OCI-LY7 (cell line): ENCODE measurements at regions of chr3 and their contacts with region 1.

Region 1: DNA sequence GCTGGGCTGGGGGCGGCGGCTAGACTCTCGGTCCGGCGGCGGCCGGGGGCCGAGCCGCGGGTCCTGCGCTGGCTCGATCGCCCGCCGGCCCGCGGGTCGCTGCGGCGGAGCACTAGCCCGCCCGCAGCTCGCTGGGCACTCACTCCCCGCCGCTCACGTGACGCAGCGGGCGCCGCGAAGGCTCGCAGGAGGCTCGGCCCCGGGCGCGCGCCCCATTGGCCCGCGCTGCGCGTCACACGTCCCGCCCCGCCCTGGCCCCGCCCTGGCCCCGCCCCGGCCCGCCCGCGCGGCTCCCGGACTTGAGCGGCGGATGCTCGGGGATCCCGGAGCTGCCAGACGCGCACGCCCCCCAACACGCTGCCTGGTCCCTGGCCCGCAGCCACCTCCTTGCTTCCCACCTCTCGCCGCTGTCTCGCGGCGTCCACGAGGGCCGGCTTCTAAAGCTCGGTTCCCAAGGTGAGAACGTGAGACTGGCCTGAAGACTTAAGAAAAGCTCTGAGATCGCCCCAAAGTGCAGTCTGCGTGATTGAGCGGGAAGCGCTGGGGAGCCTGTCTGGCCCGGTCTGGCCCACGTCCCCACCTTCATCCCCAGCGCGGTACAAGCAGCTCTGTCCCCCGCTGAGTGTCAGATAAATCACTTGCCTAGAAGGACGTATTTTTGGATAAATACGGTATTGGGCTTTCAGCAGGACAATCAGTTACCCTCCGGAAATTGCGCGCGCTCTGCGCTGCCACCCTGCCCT is at the start of gene KLF15:
- DNase-seq: peak; percentile 91
- H3K4me3 ChIP-seq: peak within 1 kb of the TSS; percentile 67
- H3K27ac ChIP-seq: peak within 1 kb of the TSS; percentile 67
- H3K4me1 ChIP-seq: peaks cover 49% of the 10 kb centered on the region
- CTCF ChIP-seq: no peak
- total RNA-seq, gene KLF15: 12.3 and 13.8 TPM in 2 replicates

Region 2: GRCh38 chr3:126259411-126260391 is 97.8 kb before region 1 on chr3:
- CTCF ChIA-PET with region 1: no interaction called
- POLR2A ChIA-PET with region 1: interaction called, 3 read pairs
- intact Hi-C with region 1: loop called (anchors 1 kb)
- DNase-seq: peak; percentile 35
- H3K4me3 ChIP-seq: no peak overlapping the region
- H3K27ac ChIP-seq: peak overlapping the region; percentile 73
- H3K4me1 ChIP-seq: peaks cover 37% of the 10 kb centered on the region
- CTCF ChIP-seq: peak; percentile 73

Region 3: GRCh38 chr3:126287536-126288241 is 69.8 kb before region 1 on chr3:
- CTCF ChIA-PET with region 1: no interaction called
- POLR2A ChIA-PET with region 1: interaction called, 3 read pairs
- intact Hi-C with region 1: loop called (anchors 1 kb)
- DNase-seq: peak; percentile 86
- H3K4me3 ChIP-seq: peak overlapping the region; percentile 66
- H3K27ac ChIP-seq: peak overlapping the region; percentile 83
- H3K4me1 ChIP-seq: peaks cover 59% of the 10 kb centered on the region
- CTCF ChIP-seq: no peak

Region 4: GRCh38 chr3:126475413-126476114 is 118.1 kb after region 1 on chr3 and contains the start of gene ZXDC:
- CTCF ChIA-PET with region 1: no interaction called
- POLR2A ChIA-PET with region 1: no interaction called
- intact Hi-C with region 1: loop called (anchors 5 kb)
- DNase-seq: peak; percentile 94
- H3K4me3 ChIP-seq: peak within 1 kb of the TSS; percentile 76
- H3K27ac ChIP-seq: peak within 1 kb of the TSS; percentile 34
- H3K4me1 ChIP-seq: peaks cover 35% of the 10 kb centered on the region
- CTCF ChIP-seq: peak; percentile 45; the same call in 1 of the 2 replicates
- total RNA-seq, gene ZXDC: 26.6 and 34.9 TPM in 2 replicates

Region 5: DNA sequence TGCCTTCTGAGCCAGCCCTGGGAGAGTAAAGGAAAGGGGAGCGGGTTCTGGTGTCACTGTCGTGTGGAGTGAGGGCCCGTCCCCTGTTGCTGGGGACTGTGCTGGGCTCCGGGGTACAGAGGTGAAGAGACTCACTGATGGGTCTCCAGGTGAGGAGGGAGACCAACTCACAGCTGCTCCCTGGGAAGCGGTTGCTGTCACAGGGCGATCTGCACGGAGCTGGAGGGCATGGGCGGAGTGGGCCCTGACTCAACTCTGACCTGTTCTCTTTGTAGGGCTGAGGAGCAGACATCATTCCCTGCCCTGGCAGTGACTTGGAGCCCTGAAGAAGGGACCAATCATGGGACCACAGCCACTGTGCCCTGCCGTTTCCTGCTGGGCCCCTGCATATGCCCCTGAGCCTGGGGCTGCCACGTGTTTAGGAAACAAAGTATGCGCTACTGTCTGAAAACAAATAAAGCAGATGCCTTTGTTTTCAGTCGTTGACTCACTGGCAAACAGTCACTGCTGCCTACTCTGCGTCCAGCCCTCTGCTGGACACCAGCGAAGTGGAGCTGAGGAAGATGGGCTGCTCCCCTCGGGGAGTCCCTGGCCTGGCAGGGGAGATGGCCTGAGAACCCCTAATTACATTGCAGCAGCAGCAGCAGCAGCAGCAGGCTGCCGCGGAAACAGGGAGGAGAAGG is 602.6 kb after region 1 on chr3:
- CTCF ChIA-PET with region 1: no interaction called
- POLR2A ChIA-PET with region 1: no interaction called
- intact Hi-C with region 1: loop called (anchors 5 kb)
- DNase-seq: no peak
- H3K4me3 ChIP-seq: no peak overlapping the region
- H3K27ac ChIP-seq: no peak overlapping the region
- H3K4me1 ChIP-seq: peaks cover 24% of the 10 kb centered on the region
- CTCF ChIP-seq: no peak